ENCODE measurements at regions of chr6 and their contacts with region 1.

Region 1: GRCh38 chr6:56335726-56336125 is 88.3 kb upstream of the COL21A1 start:
- DNase-seq: no peak
- H3K4me3 ChIP-seq: no peak overlapping the region
- H3K27ac ChIP-seq: no peak overlapping the region
- H3K4me1 ChIP-seq: no peaks in the 10 kb centered on the region
- CTCF ChIP-seq: no peak

Region 2: DNA sequence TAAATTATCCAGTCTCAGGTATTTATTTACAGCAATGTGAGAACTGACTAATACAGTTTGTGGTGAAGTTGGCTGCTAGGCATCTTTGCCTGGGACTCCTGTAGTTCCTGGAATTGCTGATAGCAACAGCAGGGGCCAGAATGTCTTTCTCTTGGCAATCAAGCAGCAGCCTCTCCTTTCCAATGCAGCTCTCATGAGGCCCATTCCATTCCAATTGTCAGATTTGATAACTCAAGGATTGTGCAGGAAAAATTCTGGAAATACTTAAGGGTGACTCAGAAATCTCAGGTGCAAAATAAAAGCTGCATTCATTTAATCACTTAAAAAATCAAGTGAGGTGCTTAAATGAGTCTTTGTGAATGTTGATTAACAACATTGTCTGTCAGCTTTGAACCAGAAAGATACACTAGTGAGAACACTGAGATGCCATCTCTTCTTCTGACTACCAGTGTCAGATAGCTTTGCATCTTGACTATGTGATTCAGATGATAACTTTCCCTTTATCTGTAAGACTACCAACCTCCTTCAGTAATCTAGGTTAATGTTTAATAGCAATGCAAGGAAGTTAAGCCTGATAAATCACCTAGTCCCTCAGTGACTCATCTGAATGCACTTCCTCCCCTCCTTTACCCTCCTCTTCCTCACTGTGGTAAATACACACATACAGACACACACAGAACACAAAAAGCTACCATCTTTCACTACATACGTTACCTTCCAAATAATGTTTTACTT is 56.2 kb before region 1 on chr6:
- CTCF ChIA-PET with region 1: no interaction called
- POLR2A ChIA-PET with region 1: no interaction called
- intact Hi-C with region 1: loop called (anchors 10 kb)
- DNase-seq: no peak
- H3K4me3 ChIP-seq: no peak overlapping the region
- H3K27ac ChIP-seq: no peak overlapping the region
- H3K4me1 ChIP-seq: no peaks in the 10 kb centered on the region
- CTCF ChIP-seq: no peak

Region 3: DNA sequence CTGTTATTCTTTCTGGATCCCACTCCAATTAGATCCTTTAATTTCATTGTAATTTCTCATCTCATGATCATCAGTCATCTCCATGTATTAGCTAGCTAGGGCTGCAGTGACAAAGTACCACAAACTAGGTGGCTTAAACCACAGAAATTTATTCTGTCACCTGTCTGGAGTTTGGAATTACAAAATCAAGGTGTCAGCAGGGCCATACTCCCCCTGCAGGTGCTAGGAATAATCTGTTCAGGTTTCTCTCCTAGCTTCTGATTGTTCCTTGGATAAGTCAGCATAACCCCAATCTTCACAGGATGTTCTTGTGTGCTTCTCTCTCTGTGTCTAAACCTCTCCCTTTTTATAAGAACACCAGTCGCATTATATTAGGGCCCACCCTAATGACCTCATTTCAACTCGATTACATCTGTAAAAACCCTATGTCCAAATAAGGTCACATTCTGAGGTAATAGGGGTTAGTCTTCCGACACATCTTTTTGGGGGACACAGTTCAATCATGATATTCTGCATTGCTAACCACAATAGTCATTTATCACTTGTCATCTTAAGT is 659.7 kb after region 1 on chr6:
- CTCF ChIA-PET with region 1: no interaction called
- POLR2A ChIA-PET with region 1: no interaction called
- intact Hi-C with region 1: no loop called
- DNase-seq: peak; percentile 6
- H3K4me3 ChIP-seq: no peak overlapping the region
- H3K27ac ChIP-seq: no peak overlapping the region
- H3K4me1 ChIP-seq: no peaks in the 10 kb centered on the region
- CTCF ChIP-seq: peak; percentile 51